Gastrocnemius medialis (tissue), 4 donors: ENCODE measurements at regions of chr3 and their contacts with region 1.

Region 1: DNA sequence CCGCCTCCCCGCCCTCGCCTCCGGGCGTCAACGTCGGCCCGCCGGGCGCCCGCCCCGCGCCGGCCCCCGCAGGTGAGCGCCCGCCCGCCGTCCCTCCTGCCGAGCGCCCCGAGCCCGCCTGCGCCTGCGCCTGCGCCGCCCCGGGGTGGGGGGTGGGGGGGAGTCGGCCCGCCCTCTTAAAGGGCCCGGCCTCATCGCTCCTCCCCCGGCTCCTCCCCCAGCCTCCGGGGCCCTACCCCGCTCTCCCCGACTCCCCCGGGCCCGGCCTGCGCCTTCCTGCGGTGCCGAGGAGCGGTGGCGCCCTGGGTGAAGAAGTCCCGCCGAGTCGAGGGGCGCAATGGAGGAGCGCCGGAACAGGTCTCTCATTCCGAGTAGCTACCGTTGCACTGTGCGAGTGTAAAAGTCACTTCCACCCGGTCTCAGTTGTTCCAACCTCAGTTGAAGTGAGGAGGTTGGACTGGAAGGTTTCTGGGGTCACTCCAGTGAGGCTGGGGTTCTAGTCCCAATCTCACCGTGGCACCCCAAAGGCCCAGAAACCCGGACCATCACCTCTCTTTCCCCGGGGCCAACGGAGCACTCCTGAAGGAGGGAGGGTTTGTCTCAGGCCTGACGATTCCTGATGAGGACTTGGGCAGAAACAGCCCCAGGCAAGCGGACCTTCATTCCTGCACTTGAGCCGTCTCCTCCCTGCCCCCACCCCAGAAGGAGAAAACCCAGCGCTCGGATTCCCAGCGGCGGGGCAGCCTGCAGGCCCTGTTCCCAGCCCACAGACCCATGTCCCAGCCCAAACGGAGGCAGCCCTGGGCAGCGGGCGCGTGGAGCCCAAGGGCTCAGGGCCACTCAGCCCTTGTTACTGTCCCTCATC is 1.5 kb upstream of the TNK2 start:
- DNase-seq: peak; percentile 77 to 87
- ATAC-seq: peak; percentile 20 to 32
- H3K4me3 ChIP-seq: peak overlapping the region; percentile 54 to 74 (median 66)
- H3K27ac ChIP-seq: peak overlapping the region; percentile 85 to 98 (median 96)
- H3K4me1 ChIP-seq: peaks cover 36 to 48% of the 10 kb centered on the region in 2 donors
- H3K27me3 ChIP-seq: no peaks in the 10 kb centered on the region
- CTCF ChIP-seq: no peak
- POLR2A ChIP-seq: peak; percentile 82 to 88

Region 2: GRCh38 chr3:194696475-194697091 is 1213.3 kb before region 1 on chr3:
- in situ Hi-C with region 1: no loop called
- intact Hi-C with region 1: loop called (anchors 5 kb)
- DNase-seq: no peak
- ATAC-seq: no peak
- H3K4me3 ChIP-seq: no peak overlapping the region
- H3K27ac ChIP-seq: no peak overlapping the region
- H3K4me1 ChIP-seq: no peaks in the 10 kb centered on the region
- H3K27me3 ChIP-seq: no peaks in the 10 kb centered on the region
- CTCF ChIP-seq: no peak
- POLR2A ChIP-seq: no peak

Region 3: DNA sequence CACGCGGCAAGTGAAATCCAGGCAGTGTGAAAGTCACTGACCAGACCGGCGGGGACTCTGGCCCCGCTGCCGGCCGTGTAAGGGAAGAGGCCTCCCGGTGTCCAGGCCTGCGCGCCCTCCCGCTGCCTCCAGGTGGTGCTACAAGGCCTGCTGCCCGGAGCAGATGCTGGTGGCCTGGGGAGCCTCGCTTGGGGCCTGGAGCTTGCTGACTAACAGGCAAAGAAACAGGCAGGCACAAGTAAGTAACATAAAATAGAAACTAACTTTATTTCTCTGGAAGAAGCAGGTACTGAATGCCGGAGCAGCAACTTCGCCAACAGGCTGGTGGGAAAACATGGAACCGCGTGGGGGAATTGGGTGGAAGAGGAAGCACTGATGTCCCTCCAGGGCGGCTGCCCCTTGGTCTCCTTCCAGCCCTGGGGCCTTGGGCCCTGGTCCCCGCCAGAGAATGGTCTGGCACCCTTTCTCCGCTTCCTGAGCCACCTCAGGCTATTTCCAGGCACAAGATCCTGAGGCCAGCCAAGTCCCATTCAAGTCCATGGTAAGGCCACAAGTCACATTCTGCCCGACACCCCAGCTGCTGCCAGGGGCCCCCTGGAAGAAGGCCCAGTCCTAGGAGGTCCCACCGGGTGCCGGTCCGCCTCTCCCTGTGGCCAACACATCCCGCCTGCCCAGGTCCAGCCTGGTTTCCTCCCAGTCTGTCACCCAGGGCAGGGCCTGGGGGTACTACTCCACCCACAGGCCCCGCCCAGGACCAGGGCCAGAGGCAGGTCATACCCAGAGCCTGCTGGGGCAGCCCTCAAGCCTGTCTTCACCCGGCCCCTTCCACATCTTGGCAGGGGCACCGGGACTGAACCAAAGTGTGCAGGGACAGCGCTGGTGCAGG is 46.5 kb before region 1 on chr3:
- in situ Hi-C with region 1: loop called in 2 of 4 experiments (anchors 10 kb)
- intact Hi-C with region 1: loop called (anchors 1 kb)
- DNase-seq: peak; percentile 88 to 95
- ATAC-seq: peak; percentile 86
- H3K4me3 ChIP-seq: peak overlapping the region in 1 of 4 donors; percentile 2
- H3K27ac ChIP-seq: peak overlapping the region; percentile 87 to 93 (median 90)
- H3K4me1 ChIP-seq: peaks cover 10 to 23% of the 10 kb centered on the region in 2 donors
- H3K27me3 ChIP-seq: no peaks in the 10 kb centered on the region
- CTCF ChIP-seq: peak; percentile 97 to 99 (median 98)
- POLR2A ChIP-seq: no peak

Region 4: DNA sequence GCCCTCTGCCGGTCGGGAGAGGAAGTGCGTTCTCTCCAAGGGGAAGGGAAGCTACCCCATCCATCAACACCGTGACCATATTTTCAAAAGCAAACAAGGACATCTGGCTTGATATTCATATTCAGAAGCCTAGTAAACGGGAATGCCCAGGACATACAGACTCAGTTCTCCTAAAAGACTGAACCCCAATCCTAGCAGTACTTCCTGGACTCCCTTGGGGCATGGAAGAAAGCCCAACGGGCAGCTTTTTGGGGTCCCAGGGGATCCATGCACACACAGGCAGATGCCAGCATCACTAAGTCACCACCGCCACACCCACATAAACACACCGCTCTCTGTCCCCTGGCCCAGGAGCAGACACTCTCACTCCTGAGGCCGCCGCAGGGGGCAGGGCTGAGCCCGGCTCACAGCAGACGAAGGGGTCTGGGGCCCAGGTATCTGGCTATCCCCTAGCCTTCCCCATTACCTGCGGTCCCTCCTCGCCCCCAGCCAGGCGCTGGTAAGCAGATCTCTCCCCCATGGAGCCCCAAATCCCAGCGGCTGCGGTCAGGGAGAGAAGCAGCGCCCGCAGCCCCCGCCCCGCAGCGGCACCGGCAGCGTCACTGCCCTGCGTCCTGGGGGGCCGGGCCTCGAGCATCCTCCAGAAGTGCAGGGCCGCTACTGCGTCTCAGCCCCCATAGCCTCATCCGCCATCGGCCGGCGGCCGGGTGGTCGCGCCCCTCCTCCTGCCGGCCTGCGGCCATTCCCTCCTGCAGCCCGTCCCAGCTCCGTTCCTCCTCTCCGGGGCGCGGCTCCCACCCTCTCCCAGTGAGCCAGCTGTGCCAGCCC is 14.9 kb before region 1 on chr3:
- in situ Hi-C with region 1: no loop called
- intact Hi-C with region 1: loop called (anchors 1 kb)
- DNase-seq: peak in 1 of 2 donors; percentile 73
- ATAC-seq: peak; percentile 33 to 49
- H3K4me3 ChIP-seq: peak overlapping the region; percentile 73 to 89 (median 78)
- H3K27ac ChIP-seq: peak overlapping the region; percentile 91 to 99 (median 92)
- H3K4me1 ChIP-seq: peaks cover 71 to 87% of the 10 kb centered on the region in 2 donors
- H3K27me3 ChIP-seq: no peaks in the 10 kb centered on the region
- CTCF ChIP-seq: peak; percentile 94 to 99 (median 95)
- POLR2A ChIP-seq: peak in 1 of 2 donors; percentile 39